ENCODE measurements at regions of chr7 and their contacts with region 1.

Region 1: DNA sequence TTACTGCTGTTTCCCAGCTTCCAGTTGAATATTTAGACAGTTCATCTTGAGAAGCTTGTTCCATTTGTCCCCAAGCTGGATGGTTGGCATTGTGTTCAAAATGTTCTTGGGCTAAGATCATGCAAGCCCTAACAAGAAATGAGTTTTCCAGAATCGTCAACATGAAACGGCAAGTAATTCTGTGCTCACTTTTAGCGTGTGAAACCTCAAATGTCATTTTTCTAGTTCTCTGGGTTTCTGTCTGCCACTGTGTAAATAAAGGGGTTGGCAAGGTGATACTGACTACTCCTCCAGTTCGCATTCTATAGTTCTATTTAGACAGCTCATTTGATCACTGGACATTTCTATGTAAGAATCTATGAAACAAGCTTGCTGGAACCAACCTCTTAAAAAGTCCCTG is 194.0 kb downstream of the AHR start:
- DNase-seq: peak; percentile 35
- H3K4me3 Mint-ChIP-seq: no peak overlapping the region
- H3K27ac Mint-ChIP-seq: no peak overlapping the region
- H3K4me1 Mint-ChIP-seq: peaks cover 26% of the 10 kb centered on the region
- H3K27me3 Mint-ChIP-seq: no peaks in the 10 kb centered on the region
- CTCF ChIP-seq: no peak

Region 2: GRCh38 chr7:17408245-17408903 is 84.1 kb before region 1 on chr7:
- CTCF ChIA-PET with region 1: no interaction called
- POLR2A ChIA-PET with region 1: interaction called, 13 read pairs
- intact Hi-C with region 1: loop called (anchors 10 kb)
- DNase-seq: peak; percentile 97
- H3K4me3 Mint-ChIP-seq: peak overlapping the region; percentile 48
- H3K27ac Mint-ChIP-seq: peak overlapping the region; percentile 90
- H3K4me1 Mint-ChIP-seq: peaks cover 34% of the 10 kb centered on the region
- H3K27me3 Mint-ChIP-seq: no peaks in the 10 kb centered on the region
- CTCF ChIP-seq: no peak

Region 3: DNA sequence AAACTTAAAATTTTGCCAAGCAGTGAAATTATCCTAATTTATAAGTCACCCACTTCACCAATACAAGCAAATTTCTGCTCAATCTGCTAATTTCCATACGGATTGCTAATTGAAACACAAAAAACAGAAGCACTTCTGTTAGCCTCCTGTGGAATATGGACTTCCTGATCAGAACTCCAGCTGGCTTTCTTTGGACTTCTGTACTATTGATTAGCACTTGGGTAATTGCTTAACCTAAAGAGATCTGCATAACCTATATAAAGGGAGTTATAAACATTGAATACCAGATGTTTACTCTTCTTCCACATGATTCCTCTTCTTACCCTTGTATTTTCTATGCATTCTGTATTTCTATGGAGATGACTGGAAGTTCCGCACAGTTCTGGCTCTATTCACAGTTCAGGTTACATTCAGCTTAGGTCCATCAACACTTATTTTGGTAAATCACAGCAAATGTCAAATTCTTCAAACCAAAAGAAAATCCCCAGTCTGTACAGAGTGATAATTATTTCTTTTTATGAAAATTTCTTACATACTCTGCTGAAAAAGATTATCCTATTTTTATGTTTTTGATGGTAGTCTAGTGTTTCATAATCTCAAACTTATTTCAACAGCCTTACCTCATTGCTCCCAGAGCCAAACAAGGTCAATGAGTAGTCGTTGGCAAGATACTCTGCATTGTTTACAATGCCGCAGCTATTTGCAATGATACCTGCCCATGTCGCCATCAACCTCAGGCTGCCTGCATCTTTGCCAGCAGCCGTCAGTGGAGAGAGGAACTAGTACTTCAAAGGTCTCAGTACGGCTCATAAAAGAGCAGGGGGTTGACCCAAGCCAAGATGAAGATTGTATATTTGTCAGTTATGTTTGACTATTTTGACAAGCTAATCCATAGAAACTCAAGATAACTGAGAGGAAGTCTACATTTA is 31.6 kb after region 1 on chr7:
- CTCF ChIA-PET with region 1: interaction called, 5 read pairs
- POLR2A ChIA-PET with region 1: interaction called, 23 read pairs
- intact Hi-C with region 1: no loop called
- DNase-seq: peak; percentile 96
- H3K4me3 Mint-ChIP-seq: peak overlapping the region; percentile 19
- H3K27ac Mint-ChIP-seq: peak overlapping the region; percentile 83
- H3K4me1 Mint-ChIP-seq: peaks cover 50% of the 10 kb centered on the region
- H3K27me3 Mint-ChIP-seq: no peaks in the 10 kb centered on the region
- CTCF ChIP-seq: no peak